Activated naive CD4-positive, alpha-beta T cell treated with anti-CD3 and anti-CD28 coated beads for 36 hours (primary cell): ENCODE measurements at regions of chr17 and their contacts with region 1.

Region 1: DNA sequence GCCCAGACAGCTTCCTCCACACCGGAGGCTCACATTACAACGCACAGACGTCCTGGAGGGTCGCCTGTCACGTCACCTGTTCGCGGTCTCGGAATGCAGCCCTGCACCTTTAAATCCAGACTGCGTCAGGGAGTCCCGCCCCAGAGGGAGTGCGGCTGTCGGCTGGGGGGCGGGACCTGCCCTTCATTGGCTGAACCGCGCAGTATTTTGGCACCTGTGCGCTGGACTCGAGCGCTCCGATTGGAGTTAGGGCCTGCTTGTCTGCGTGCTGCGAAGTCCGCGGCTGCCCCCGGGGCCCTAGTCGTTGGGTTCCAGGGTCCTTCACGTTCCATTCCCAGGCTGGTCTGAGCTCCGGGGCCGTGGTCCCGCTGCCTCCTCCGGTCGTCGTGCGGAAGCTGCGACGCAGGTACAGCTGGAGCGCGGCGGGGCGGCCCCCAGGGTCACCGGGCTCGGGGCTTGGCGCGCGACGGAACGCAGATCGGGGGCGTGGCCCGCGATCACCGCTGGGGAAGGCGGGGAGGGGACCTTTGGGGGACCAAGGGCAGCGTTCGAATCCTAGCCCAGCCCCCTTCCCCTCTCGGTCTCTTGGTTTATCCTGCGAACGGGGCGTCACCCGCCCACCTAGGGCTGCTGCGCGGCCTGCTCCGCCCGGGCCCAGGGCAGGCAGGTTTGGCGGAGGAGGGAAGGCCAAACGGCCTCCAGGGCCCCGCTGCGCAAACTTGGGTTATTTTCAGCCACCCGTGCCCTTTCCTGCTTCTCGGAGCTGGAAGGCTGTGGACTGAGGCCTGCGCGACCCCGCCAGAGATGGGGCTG is at the start of gene MIEF2:
- DNase-seq: peak; percentile 95
- H3K4me3 Mint-ChIP-seq: peak within 1 kb of the TSS; percentile 78
- H3K27ac Mint-ChIP-seq: peak within 1 kb of the TSS; percentile 73
- H3K4me1 Mint-ChIP-seq: peaks cover 30% of the 10 kb centered on the region
- H3K27me3 Mint-ChIP-seq: no peaks in the 10 kb centered on the region
- total RNA-seq, gene MIEF2: 6.0 to 7.1 TPM

Region 2: DNA sequence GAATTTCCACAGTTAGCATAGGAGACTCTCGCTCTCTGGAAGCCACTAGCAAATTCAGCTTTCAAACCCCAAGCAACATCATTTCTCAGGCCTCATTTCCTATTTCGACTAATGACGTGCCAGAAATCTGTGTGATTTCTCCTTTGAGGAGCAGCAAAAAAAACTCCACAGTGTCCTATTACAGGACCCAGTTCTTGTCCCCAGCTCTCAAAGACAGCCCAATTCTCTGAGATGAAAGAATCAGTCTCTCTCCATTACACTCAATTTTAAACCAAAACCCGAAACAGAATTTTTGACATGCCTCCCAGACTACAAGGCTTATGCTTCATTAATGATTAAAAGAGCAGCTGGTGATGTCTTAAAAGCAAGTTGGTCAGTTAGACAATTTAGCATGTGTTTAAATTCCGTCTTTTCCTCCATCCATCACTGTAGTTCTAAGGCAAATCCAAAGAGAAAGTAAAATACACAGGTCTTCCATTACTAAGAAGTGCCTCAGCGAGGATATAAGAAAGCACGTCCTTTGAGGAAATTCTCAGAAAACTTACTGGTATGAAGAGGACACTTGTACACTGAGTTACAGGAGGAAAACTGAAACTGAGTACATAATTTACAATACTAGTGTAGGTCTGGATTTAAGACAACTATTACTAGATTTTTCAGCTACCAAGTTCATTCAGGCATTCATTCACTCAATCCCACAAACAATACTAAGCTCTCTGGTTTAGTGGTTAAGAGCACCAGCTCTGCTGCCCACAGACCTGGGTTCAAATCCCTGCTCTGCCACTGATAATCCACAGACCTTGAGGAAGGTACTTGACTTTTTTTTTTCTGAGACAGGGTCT is 300.8 kb before region 1 on chr17:
- CTCF ChIA-PET with region 1: no interaction called
- intact Hi-C with region 1: loop called (anchors 10 kb)
- DNase-seq: peak; percentile 60
- H3K4me3 Mint-ChIP-seq: peak overlapping the region; percentile 74
- H3K27ac Mint-ChIP-seq: peak overlapping the region; percentile 96
- H3K4me1 Mint-ChIP-seq: peaks cover 72% of the 10 kb centered on the region
- H3K27me3 Mint-ChIP-seq: no peaks in the 10 kb centered on the region

Region 3: DNA sequence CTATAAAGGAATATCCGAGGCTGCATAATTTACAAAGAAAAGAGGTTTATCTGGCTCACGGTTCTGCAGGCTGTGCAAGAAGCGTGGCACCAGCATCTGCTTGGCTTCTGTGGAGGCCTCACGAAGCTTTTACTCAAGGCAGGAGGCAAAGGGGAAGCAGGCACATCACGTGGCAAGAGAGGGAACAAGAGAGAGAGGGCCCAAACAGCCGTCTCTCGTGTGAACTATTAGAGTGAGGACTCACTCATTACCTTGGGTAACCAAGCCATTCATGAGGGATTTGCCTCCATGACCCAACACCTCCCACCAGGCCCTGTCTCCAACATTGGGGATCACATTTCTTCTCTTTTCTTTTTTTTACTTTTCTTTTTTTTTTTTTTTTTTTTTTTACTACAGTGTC is 84.4 kb before region 1 on chr17:
- CTCF ChIA-PET with region 1: no interaction called
- intact Hi-C with region 1: no loop called
- DNase-seq: no peak
- H3K4me3 Mint-ChIP-seq: no peak overlapping the region
- H3K27ac Mint-ChIP-seq: no peak overlapping the region
- H3K4me1 Mint-ChIP-seq: peaks cover 7% of the 10 kb centered on the region
- H3K27me3 Mint-ChIP-seq: no peaks in the 10 kb centered on the region

Region 4: DNA sequence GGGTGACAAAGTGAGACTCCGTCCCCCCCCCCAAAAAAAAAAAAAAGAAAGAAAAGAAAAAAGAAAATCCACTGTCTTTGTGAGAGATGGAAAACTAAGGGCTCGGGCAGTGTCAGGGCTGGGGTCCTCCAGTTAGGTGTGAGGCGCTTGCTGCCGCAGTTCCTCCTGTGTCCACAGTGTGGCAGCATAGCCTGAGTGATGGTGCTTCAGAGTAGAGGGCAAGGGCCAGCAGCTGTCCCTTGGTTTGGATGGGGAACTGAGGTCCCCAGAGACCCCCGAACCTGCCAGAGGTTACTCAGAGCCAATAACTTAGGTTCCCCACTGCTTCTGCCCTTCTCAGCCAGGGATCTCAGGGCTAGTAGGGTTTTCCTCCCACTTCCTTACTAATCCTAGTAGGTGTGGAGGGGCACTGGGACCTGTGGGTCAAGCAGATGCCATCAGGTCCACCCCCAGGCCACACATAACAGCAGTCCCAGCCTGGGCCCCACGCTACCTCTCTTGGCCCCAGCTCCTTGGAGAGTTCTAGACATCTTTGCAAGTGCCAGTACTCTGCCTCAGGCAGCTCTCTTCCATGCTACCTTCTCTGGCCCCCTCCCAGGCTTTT is 43.0 kb before region 1 on chr17:
- CTCF ChIA-PET with region 1: interaction called, 5 read pairs
- intact Hi-C with region 1: loop called (anchors 2 kb)
- DNase-seq: peak; percentile 87
- H3K4me3 Mint-ChIP-seq: no peak overlapping the region
- H3K27ac Mint-ChIP-seq: no peak overlapping the region
- H3K4me1 Mint-ChIP-seq: no peaks in the 10 kb centered on the region
- H3K27me3 Mint-ChIP-seq: no peaks in the 10 kb centered on the region

Region 5: DNA sequence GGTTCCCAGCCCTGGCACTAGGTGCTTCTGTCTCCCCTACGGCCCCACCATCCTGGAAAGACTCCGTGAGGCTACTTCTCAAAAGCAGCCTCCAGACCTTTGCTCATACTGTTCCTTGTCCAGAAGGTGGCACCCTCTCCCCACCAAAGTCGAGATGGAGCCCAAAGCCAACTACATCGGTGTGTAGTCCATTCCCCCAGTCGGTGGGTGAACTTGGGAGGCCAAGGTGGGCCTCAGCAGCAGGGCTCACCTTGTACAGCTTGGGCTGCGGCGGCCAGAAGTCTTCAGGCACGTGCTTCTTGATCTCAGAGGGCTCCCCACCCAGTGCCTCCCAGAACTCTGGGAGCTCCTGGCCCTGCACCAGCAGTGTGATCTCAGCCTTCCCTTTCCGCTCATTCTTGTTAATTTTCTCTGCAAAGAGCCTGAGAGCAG is 12.2 kb before region 1 on chr17:
- CTCF ChIA-PET with region 1: interaction called, 4 read pairs
- intact Hi-C with region 1: loop called (anchors 1 kb)
- DNase-seq: peak; percentile 83
- H3K4me3 Mint-ChIP-seq: no peak overlapping the region
- H3K27ac Mint-ChIP-seq: peak overlapping the region; percentile 28
- H3K4me1 Mint-ChIP-seq: no peaks in the 10 kb centered on the region
- H3K27me3 Mint-ChIP-seq: no peaks in the 10 kb centered on the region

Region 6: GRCh38 chr17:18363101-18364049 is 102.8 kb after region 1 on chr17 and contains the start of gene SHMT1:
- CTCF ChIA-PET with region 1: no interaction called
- intact Hi-C with region 1: loop called (anchors 2 kb)
- DNase-seq: peak; percentile 94
- H3K4me3 Mint-ChIP-seq: peak within 1 kb of the TSS; percentile 89
- H3K27ac Mint-ChIP-seq: peak within 1 kb of the TSS; percentile 83
- H3K4me1 Mint-ChIP-seq: peaks cover 15% of the 10 kb centered on the region
- H3K27me3 Mint-ChIP-seq: peaks cover 1% of the 10 kb centered on the region
- total RNA-seq, gene SHMT1: 46.7 to 51.0 TPM